Naive thymus-derived CD4-positive, alpha-beta T cell (primary cell): ENCODE measurements at regions of chr7 and their contacts with region 1.

Region 1: GRCh38 chr7:17940302-17940883 is at the start of gene SNX13:
- DNase-seq: peak; percentile 80 to 89 (median 86)
- ATAC-seq: peak; percentile 97
- H3K4me3 ChIP-seq: peak within 1 kb of the TSS; percentile 90
- H3K4me3 Mint-ChIP-seq: peak within 1 kb of the TSS; percentile 98 to 99 (median 99)
- H3K27ac ChIP-seq: peak within 1 kb of the TSS; percentile 95
- H3K27ac Mint-ChIP-seq: peak within 1 kb of the TSS; percentile 91 to 99 (median 98)
- H3K4me1 ChIP-seq: peaks cover 12 to 19% of the 10 kb centered on the region in 2 donors
- H3K4me1 Mint-ChIP-seq: peaks cover 35 to 57% (median 50%) of the 10 kb centered on the region in 7 donors
- H3K27me3 ChIP-seq: no peaks in the 10 kb centered on the region
- H3K27me3 Mint-ChIP-seq: peaks cover 0 to 19% (median 0%) of the 10 kb centered on the region in 5 donors
- total RNA-seq, gene SNX13: 23.8 to 40.9 (median 29.0) TPM

Region 2: GRCh38 chr7:16645593-16646471 is 1294.6 kb before region 1 on chr7 and contains the starts of genes ANKMY2 and BZW2:
- CTCF ChIA-PET with region 1: no interaction called
- POLR2A ChIA-PET with region 1: no interaction called
- intact Hi-C with region 1: loop called (anchors 1 to 2 kb)
- DNase-seq: peak; percentile 88 to 96 (median 93)
- ATAC-seq: peak; percentile 94
- H3K4me3 ChIP-seq: peak within 1 kb of the TSS; percentile 87
- H3K4me3 Mint-ChIP-seq: peak within 1 kb of the TSS; percentile 89 to 100 (median 97)
- H3K27ac ChIP-seq: peak within 1 kb of the TSS; percentile 76
- H3K27ac Mint-ChIP-seq: peak within 1 kb of the TSS; percentile 91 to 99 (median 97)
- H3K4me1 ChIP-seq: peaks cover 14 to 25% of the 10 kb centered on the region in 2 donors
- H3K4me1 Mint-ChIP-seq: peaks cover 46 to 83% (median 65%) of the 10 kb centered on the region in 7 donors
- H3K27me3 ChIP-seq: no peaks in the 10 kb centered on the region
- H3K27me3 Mint-ChIP-seq: no peaks in the 10 kb centered on the region
- total RNA-seq, gene ANKMY2: 6.3 to 16.4 (median 8.7) TPM
- total RNA-seq, gene BZW2: 24.6 to 52.1 (median 28.0) TPM

Region 3: DNA sequence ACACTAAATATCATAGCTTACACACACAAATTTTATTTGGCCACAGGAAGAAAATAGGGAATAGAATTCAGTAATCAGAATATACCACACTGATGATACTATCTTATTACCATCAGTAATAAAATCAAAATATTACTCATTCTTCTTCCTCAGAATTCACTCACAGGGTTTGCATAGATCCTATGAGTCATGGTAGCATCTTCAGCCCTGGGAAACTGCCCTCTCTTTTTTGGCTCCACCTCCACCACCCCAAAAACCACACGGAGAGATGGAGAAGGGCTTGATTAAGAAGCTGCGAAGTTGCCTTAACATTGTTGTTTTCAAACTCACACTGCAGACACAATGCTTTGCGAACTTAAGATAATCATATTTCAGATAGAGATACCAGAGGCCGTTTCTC is 796.1 kb before region 1 on chr7:
- CTCF ChIA-PET with region 1: no interaction called
- POLR2A ChIA-PET with region 1: no interaction called
- intact Hi-C with region 1: loop called in 1 of 2 experiments (anchors 1 kb)
- DNase-seq: peak in 1 of 9 donors; percentile 69
- ATAC-seq: peak; percentile 82
- H3K4me3 ChIP-seq: peak overlapping the region; percentile 6
- H3K4me3 Mint-ChIP-seq: peak overlapping the region in 9 of 10 donors; percentile 26 to 85 (median 49)
- H3K27ac ChIP-seq: no peak overlapping the region
- H3K27ac Mint-ChIP-seq: peak overlapping the region in 8 of 9 donors; percentile 0 to 91 (median 55)
- H3K4me1 ChIP-seq: peaks cover 26 to 35% of the 10 kb centered on the region in 2 donors
- H3K4me1 Mint-ChIP-seq: peaks cover 21 to 57% (median 46%) of the 10 kb centered on the region in 7 donors
- H3K27me3 ChIP-seq: no peaks in the 10 kb centered on the region
- H3K27me3 Mint-ChIP-seq: no peaks in the 10 kb centered on the region

Region 4: DNA sequence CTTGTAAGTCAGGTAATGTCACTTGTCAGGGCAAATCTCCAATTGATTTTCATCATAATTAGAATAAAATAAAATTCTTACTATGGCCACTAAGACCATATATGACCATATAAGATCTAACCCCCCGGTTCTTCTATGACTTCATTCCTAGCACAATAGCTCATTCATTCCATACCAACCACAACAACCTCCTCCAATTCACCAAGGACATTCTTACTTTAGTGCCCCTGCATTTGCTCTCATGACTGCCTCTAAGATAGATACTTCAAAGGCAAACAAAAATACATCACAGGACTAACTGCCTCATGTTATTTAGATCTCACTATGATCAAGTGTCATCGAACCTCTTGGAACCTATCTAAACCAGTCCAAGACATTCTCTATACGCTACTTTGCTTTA is 90.9 kb before region 1 on chr7:
- CTCF ChIA-PET with region 1: no interaction called
- POLR2A ChIA-PET with region 1: no interaction called
- intact Hi-C with region 1: loop called in 1 of 2 experiments (anchors 5 kb)
- DNase-seq: no peak
- ATAC-seq: no peak
- H3K4me3 ChIP-seq: no peak overlapping the region
- H3K4me3 Mint-ChIP-seq: no peak overlapping the region
- H3K27ac ChIP-seq: no peak overlapping the region
- H3K27ac Mint-ChIP-seq: peak overlapping the region in 1 of 9 donors; percentile 9
- H3K4me1 ChIP-seq: no peaks in the 10 kb centered on the region
- H3K4me1 Mint-ChIP-seq: peaks cover 9 to 30% (median 22%) of the 10 kb centered on the region in 7 donors
- H3K27me3 ChIP-seq: no peaks in the 10 kb centered on the region
- H3K27me3 Mint-ChIP-seq: no peaks in the 10 kb centered on the region